T-cell (primary cell): ENCODE measurements at regions of chr3 and their contacts with region 1.

Region 1: DNA sequence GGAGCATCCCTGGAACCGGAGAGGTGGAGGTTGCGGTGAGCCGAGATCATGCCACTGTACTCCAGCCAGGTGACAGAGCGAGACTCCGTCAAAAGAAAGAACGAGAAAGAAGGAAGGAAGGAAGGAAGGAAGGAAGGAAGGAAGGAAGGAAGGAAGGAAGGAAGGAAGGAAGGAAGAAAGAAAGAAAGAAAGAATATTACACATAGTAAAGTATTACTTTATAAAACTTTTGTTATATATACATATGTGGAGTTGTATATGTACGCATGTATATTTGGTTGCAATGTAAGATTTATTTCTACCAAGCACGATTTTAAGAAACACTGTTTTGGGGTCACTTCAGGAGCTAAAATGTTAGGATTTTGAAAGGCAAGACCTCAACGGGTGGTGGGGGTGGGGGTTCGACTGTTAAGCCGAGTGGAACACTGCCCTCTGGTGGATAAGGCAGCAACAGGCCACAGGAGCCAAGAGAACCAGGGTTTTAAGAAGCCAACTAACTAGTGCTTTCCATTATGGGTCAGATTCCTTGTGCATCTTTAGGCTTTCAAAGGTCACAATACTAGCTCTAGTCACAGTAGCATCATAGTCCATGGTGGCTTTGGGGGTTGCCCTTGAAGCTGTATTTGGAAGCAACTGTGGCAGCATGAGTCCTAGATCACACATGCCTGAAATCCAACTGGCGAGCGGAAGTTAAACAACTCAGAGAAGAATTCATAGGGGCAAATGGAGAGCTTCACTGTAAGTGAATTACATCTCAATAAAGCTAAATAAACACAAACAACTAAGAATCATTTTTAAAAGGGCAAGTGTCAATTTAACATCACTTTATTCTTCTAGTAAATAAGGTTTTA is 22.5 kb downstream of the GLB1 start:
- DNase-seq: peak; percentile 16 to 84 (median 56)
- ATAC-seq: peak; percentile 61 to 80 (median 74)
- H3K4me3 ChIP-seq: no peak overlapping the region
- H3K4me3 Mint-ChIP-seq: no peak overlapping the region
- H3K27ac ChIP-seq: no peak overlapping the region
- H3K27ac Mint-ChIP-seq: peak overlapping the region; percentile 30 to 39
- H3K4me1 ChIP-seq: peaks cover 10 to 12% of the 10 kb centered on the region in 2 experiments
- H3K4me1 Mint-ChIP-seq: peaks cover 20 to 57% (median 26%) of the 10 kb centered on the region in 3 donors
- H3K27me3 ChIP-seq: no peaks in the 10 kb centered on the region
- H3K27me3 Mint-ChIP-seq: no peaks in the 10 kb centered on the region

Region 2: GRCh38 chr3:32551087-32551486 is 523.4 kb before region 1 on chr3:
- CTCF ChIA-PET with region 1: no interaction called
- POLR2A ChIA-PET with region 1: no interaction called
- DNase-seq: no peak
- ATAC-seq: no peak
- H3K4me3 ChIP-seq: no peak overlapping the region
- H3K4me3 Mint-ChIP-seq: no peak overlapping the region
- H3K27ac ChIP-seq: no peak overlapping the region
- H3K27ac Mint-ChIP-seq: no peak overlapping the region
- H3K4me1 ChIP-seq: no peaks in the 10 kb centered on the region
- H3K4me1 Mint-ChIP-seq: peaks cover 49 to 64% (median 54%) of the 10 kb centered on the region in 3 donors
- H3K27me3 ChIP-seq: no peaks in the 10 kb centered on the region
- H3K27me3 Mint-ChIP-seq: no peaks in the 10 kb centered on the region

Region 3: DNA sequence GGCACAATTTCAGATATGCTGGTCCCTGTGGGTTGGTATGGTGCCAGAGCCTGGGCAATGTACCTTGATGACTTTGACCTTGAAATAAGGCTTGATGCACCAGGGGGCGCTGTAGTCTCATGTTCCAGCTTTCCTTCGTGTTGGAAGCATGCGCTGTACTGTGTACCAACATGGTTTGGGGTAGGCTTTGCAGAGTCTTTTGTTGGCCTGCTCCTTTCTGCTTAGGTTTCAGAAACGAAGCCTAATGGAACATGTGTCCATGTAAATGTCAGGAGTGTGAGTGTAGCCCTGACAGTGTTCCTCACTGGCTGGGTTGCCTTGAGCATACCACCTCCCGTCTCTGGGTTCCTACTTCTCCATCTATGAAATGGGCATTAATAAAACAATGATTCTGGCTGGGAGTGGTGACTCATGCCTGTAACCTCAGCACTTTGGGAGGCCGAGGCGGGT is 126.6 kb before region 1 on chr3:
- CTCF ChIA-PET with region 1: interaction called, 50 to 68 read pairs
- POLR2A ChIA-PET with region 1: interaction called in 1 of 2 experiments, 3 read pairs
- DNase-seq: peak; percentile 65 to 96 (median 85)
- ATAC-seq: peak; percentile 68 to 76 (median 74)
- H3K4me3 ChIP-seq: no peak overlapping the region
- H3K4me3 Mint-ChIP-seq: no peak overlapping the region
- H3K27ac ChIP-seq: no peak overlapping the region
- H3K27ac Mint-ChIP-seq: peak overlapping the region in 1 of 2 donors; percentile 28
- H3K4me1 ChIP-seq: peaks cover 7 to 28% of the 10 kb centered on the region in 2 experiments
- H3K4me1 Mint-ChIP-seq: peaks cover 30 to 42% (median 37%) of the 10 kb centered on the region in 3 donors
- H3K27me3 ChIP-seq: peaks cover 0 to 3% of the 10 kb centered on the region in 2 experiments
- H3K27me3 Mint-ChIP-seq: no peaks in the 10 kb centered on the region

Region 4: GRCh38 chr3:32954506-32954905 is 119.9 kb before region 1 on chr3:
- CTCF ChIA-PET with region 1: interaction called, 50 to 68 read pairs
- POLR2A ChIA-PET with region 1: interaction called, 9 to 11 read pairs
- DNase-seq: no peak
- ATAC-seq: no peak
- H3K4me3 ChIP-seq: peak overlapping the region in 1 of 2 donors; percentile 53
- H3K4me3 Mint-ChIP-seq: peak overlapping the region; percentile 73 to 88 (median 78)
- H3K27ac ChIP-seq: no peak overlapping the region
- H3K27ac Mint-ChIP-seq: peak overlapping the region; percentile 61 to 90
- H3K4me1 ChIP-seq: peaks cover 14 to 29% of the 10 kb centered on the region in 2 experiments
- H3K4me1 Mint-ChIP-seq: peaks cover 41 to 68% (median 51%) of the 10 kb centered on the region in 3 donors
- H3K27me3 ChIP-seq: no peaks in the 10 kb centered on the region
- H3K27me3 Mint-ChIP-seq: no peaks in the 10 kb centered on the region

Region 5: DNA sequence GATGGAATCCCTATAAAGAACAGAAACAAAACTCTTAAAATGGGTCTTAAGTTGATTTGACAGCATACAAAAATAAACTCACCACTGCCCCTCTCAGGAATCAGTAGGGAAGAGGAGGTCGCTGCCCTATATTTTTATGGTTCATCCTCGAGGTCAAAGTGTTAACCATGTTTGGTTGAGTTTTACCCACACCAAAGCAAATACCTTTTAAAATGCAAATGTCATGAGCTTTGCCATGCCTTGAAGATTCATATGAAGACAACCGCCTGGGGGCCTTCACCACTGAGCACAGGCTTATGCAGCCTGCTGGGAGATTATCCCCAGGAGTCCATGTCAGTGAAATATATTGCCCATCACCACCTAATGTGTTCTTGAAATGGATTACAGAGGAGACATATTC is 43.6 kb before region 1 on chr3:
- CTCF ChIA-PET with region 1: interaction called, 8 to 10 read pairs
- POLR2A ChIA-PET with region 1: no interaction called
- DNase-seq: peak in 6 of 35 experiments; percentile 15 to 66 (median 20)
- ATAC-seq: peak; percentile 50 to 84 (median 76)
- H3K4me3 ChIP-seq: no peak overlapping the region
- H3K4me3 Mint-ChIP-seq: no peak overlapping the region
- H3K27ac ChIP-seq: no peak overlapping the region
- H3K27ac Mint-ChIP-seq: peak overlapping the region; percentile 45 to 81
- H3K4me1 ChIP-seq: peaks cover 3 to 9% of the 10 kb centered on the region in 2 experiments
- H3K4me1 Mint-ChIP-seq: peaks cover 19 to 32% (median 24%) of the 10 kb centered on the region in 3 donors
- H3K27me3 ChIP-seq: no peaks in the 10 kb centered on the region
- H3K27me3 Mint-ChIP-seq: no peaks in the 10 kb centered on the region

Region 6: GRCh38 chr3:33041909-33042308 is 32.5 kb before region 1 on chr3:
- CTCF ChIA-PET with region 1: interaction called, 9 to 32 read pairs
- POLR2A ChIA-PET with region 1: interaction called in 1 of 2 experiments, 4 read pairs
- DNase-seq: no peak
- ATAC-seq: no peak
- H3K4me3 ChIP-seq: no peak overlapping the region
- H3K4me3 Mint-ChIP-seq: no peak overlapping the region
- H3K27ac ChIP-seq: no peak overlapping the region
- H3K27ac Mint-ChIP-seq: peak overlapping the region; percentile 7 to 68
- H3K4me1 ChIP-seq: peaks cover 20 to 31% of the 10 kb centered on the region in 2 experiments
- H3K4me1 Mint-ChIP-seq: peaks cover 41 to 60% (median 47%) of the 10 kb centered on the region in 3 donors
- H3K27me3 ChIP-seq: no peaks in the 10 kb centered on the region
- H3K27me3 Mint-ChIP-seq: no peaks in the 10 kb centered on the region

Region 7: GRCh38 chr3:33063651-33064051 is 10.8 kb before region 1 on chr3:
- CTCF ChIA-PET with region 1: interaction called, 6 to 19 read pairs
- POLR2A ChIA-PET with region 1: no interaction called
- DNase-seq: peak in 5 of 35 experiments; percentile 14 to 53 (median 44)
- ATAC-seq: peak; percentile 35 to 79 (median 68)
- H3K4me3 ChIP-seq: no peak overlapping the region
- H3K4me3 Mint-ChIP-seq: peak overlapping the region; percentile 1 to 62 (median 44)
- H3K27ac ChIP-seq: peak overlapping the region; percentile 79
- H3K27ac Mint-ChIP-seq: peak overlapping the region; percentile 84 to 90
- H3K4me1 ChIP-seq: peaks cover 38 to 60% of the 10 kb centered on the region in 2 experiments
- H3K4me1 Mint-ChIP-seq: peaks cover 57 to 80% (median 61%) of the 10 kb centered on the region in 3 donors
- H3K27me3 ChIP-seq: no peaks in the 10 kb centered on the region
- H3K27me3 Mint-ChIP-seq: no peaks in the 10 kb centered on the region

Region 8: GRCh38 chr3:33089515-33089914 is 15.1 kb after region 1 on chr3:
- CTCF ChIA-PET with region 1: interaction called, 7 to 11 read pairs
- POLR2A ChIA-PET with region 1: no interaction called
- DNase-seq: peak in 1 of 35 experiments; percentile 40
- ATAC-seq: peak in 3 of 4 experiments; percentile 43 to 62 (median 54)
- H3K4me3 ChIP-seq: no peak overlapping the region
- H3K4me3 Mint-ChIP-seq: peak overlapping the region; percentile 11 to 47 (median 41)
- H3K27ac ChIP-seq: peak overlapping the region; percentile 28
- H3K27ac Mint-ChIP-seq: peak overlapping the region; percentile 56 to 79
- H3K4me1 ChIP-seq: peaks cover 6 to 9% of the 10 kb centered on the region in 2 experiments
- H3K4me1 Mint-ChIP-seq: peaks cover 69 to 89% (median 84%) of the 10 kb centered on the region in 3 donors
- H3K27me3 ChIP-seq: no peaks in the 10 kb centered on the region
- H3K27me3 Mint-ChIP-seq: no peaks in the 10 kb centered on the region

Region 9: DNA sequence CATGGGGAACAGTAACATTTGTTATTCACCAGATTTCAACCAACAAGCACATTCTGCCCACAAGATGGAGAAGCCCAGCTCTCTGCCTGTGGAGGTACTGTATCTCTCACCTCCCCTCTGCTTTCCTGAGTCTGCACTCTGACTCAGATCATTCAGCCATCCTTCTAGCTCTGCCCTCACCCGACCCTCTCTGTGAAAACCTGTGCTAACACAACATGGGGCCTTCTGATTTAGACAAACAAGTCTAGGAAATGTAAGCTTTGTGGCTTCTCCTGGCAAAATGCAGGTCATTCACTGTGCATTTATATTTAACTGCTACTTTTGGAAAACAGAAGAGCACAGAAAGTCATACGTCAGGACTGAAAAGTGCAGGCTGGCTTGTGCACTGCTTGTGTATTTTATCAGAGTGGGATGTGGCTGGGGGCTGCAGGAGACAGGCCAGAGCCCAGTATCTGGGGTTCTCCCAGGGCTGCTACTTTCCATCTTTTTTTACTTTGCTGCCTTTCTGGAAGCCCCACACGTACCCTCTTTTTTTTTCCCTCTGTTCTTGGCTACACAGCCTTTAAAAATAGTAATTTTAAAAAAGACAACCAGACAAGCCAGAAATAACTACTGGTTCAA is 93.4 kb after region 1 on chr3:
- CTCF ChIA-PET with region 1: no interaction called
- POLR2A ChIA-PET with region 1: no interaction called
- DNase-seq: no peak
- ATAC-seq: no peak
- H3K4me3 ChIP-seq: no peak overlapping the region
- H3K4me3 Mint-ChIP-seq: no peak overlapping the region
- H3K27ac ChIP-seq: no peak overlapping the region
- H3K27ac Mint-ChIP-seq: no peak overlapping the region
- H3K4me1 ChIP-seq: no peaks in the 10 kb centered on the region
- H3K4me1 Mint-ChIP-seq: peaks cover 7 to 9% (median 8%) of the 10 kb centered on the region in 3 donors
- H3K27me3 ChIP-seq: no peaks in the 10 kb centered on the region
- H3K27me3 Mint-ChIP-seq: peaks cover 0 to 2% of the 10 kb centered on the region in 2 donors